Activated CD4-positive, alpha-beta memory T cell treated with anti-CD3 and anti-CD28 coated beads for 36 hours (primary cell): ENCODE measurements at regions of chr6 and their contacts with region 1.

Region 1: DNA sequence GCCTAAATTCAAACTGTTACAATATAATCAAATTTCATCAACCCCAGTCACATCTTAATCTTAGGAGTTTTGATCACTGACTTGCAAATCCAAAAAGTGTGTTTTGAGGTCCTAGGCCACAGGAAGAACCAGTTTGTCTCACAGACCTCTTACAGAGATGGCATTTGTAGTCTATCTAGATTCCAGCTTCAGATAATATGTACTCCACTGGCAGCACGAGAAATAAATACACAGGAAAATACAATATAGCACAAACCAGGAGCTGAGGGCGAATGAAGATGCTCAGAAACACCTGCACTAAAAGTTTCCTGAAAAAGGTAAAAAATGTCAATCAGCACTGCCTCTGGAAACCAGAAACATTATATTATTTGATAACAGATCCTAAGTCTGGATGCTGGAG is 647 bp upstream of the BTN3A3 start:
- DNase-seq: no peak
- H3K4me3 Mint-ChIP-seq: peak overlapping the region; percentile 90
- H3K27ac Mint-ChIP-seq: peak overlapping the region; percentile 93
- H3K4me1 Mint-ChIP-seq: peaks cover 40% of the 10 kb centered on the region
- H3K27me3 Mint-ChIP-seq: no peaks in the 10 kb centered on the region

Region 2: DNA sequence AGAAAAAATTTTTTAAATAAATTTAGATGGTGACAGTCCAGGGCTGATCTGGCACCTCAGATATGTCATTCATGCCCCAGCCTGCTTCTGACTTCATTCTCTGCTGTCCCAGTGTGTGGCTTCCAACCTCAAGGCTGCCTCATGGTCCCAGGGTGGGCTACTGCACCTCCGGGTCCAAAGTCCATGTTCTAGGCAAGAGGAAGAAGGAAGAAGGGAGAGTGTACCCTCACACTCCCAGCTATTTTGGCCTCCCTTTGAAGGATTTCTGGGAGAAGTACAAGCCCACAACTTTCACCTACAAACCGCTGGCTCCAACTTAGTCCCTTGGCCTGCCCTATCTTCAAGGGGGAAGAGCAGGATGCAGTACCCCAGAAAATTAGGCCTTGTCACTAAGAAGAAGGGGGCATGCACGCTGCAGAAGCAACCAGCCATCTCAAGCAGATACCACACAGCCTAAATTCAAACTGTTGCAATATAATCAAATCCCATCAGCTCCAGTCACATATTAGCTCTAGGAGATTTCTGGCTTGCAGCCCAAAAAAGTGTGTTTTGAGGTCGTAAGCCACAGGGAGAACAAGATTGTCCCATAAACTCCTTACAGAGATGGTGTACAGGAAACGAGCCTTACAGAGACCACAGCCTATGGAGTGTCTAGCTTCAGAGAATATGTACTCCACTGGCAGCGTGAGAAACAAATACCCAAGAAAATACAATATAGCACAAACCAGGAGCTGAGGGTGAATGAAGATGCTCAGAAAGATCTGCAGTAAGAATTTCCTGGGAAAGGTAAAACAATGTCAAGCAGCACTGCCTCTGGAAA is 75.6 kb before region 1 on chr6:
- CTCF ChIA-PET with region 1: no interaction called
- POLR2A ChIA-PET with region 1: no interaction called
- intact Hi-C with region 1: loop called (anchors 5 kb)
- DNase-seq: peak; percentile 18
- H3K4me3 Mint-ChIP-seq: no peak overlapping the region
- H3K27ac Mint-ChIP-seq: no peak overlapping the region
- H3K4me1 Mint-ChIP-seq: peaks cover 54% of the 10 kb centered on the region
- H3K27me3 Mint-ChIP-seq: no peaks in the 10 kb centered on the region

Region 3: DNA sequence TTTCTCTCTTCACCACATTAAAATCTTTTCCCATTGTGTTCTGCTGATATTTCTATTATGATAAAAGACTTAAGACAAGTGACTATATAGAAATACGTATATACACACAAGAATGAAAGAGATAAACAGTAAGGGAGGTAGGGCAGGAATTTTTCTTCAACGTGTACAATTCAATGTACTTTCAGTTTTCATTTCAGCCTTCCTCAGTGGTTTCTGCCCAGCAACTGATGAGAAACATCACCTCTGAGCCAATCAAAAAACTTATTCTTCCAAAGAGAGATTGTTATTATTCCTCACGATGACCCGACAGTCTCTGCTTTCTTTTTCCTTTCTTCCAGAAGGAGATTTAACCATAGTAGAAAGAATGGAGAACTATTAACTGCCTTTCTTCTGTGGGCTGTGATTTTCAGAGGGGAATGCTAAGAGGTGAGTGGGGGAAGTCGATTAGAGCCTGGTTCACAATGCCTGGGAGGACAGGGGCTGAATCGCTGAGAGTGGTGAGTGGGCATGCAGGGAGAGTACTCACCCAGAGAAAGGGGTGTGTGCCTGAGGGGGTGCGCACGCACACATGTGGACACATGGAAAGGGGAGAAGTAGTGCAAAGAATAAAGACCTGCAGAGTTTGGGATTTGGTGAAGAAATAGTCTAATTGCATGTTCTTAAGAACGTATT is 37.5 kb before region 1 on chr6 and contains the start of gene BTN3A1:
- CTCF ChIA-PET with region 1: no interaction called
- POLR2A ChIA-PET with region 1: no interaction called
- intact Hi-C with region 1: loop called (anchors 2 kb)
- DNase-seq: peak; percentile 80
- H3K4me3 Mint-ChIP-seq: peak within 1 kb of the TSS; percentile 89
- H3K27ac Mint-ChIP-seq: peak within 1 kb of the TSS; percentile 95
- H3K4me1 Mint-ChIP-seq: peaks cover 47% of the 10 kb centered on the region
- H3K27me3 Mint-ChIP-seq: no peaks in the 10 kb centered on the region
- total RNA-seq, gene BTN3A1: 36.5 to 39.0 TPM

Region 4: DNA sequence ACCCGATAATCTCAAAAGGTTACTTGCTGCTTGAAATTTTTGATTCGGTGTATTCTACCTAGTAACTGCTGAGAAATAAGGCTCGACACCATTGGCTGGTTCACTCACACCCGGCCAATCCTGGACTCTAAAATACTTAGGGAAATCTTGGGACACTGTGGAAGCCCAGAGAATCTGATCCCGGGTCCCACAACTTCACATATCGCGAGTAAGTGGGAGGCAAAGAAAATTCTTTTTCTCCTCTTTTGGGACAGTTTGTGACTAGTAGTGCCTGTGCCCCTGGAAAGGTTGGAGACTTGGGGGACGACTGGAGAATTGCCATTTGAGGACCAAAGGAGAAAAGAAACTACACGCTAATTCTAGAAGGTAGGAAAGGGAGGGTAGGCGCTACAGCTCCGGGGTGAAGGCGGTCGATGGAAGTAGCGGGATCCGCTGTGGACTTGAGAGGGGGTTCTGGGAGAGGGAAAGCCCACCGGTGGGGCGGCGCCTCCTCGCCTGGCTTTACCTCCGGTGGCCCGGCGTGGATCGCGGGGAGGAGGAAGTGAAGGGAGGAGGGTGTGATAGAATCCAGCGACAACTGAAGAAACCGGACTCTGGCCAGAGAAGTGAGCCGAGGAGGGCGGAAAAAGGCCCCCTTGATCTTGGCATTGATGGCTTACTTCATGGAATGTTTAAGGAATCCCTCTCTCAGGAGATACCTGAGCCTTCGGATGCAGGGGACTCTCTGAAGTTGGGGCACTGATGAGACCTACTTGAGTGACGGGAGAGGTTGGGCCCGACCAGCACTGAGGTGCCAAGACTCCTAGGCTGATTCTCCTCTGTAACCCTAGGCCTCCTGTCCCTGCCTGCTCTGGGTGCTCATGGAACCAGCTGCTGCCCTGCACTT is 18.2 kb before region 1 on chr6:
- CTCF ChIA-PET with region 1: no interaction called
- POLR2A ChIA-PET with region 1: no interaction called
- intact Hi-C with region 1: loop called (anchors 2 kb)
- DNase-seq: peak; percentile 62
- H3K4me3 Mint-ChIP-seq: no peak overlapping the region
- H3K27ac Mint-ChIP-seq: no peak overlapping the region
- H3K4me1 Mint-ChIP-seq: peaks cover 7% of the 10 kb centered on the region
- H3K27me3 Mint-ChIP-seq: no peaks in the 10 kb centered on the region

Region 5: DNA sequence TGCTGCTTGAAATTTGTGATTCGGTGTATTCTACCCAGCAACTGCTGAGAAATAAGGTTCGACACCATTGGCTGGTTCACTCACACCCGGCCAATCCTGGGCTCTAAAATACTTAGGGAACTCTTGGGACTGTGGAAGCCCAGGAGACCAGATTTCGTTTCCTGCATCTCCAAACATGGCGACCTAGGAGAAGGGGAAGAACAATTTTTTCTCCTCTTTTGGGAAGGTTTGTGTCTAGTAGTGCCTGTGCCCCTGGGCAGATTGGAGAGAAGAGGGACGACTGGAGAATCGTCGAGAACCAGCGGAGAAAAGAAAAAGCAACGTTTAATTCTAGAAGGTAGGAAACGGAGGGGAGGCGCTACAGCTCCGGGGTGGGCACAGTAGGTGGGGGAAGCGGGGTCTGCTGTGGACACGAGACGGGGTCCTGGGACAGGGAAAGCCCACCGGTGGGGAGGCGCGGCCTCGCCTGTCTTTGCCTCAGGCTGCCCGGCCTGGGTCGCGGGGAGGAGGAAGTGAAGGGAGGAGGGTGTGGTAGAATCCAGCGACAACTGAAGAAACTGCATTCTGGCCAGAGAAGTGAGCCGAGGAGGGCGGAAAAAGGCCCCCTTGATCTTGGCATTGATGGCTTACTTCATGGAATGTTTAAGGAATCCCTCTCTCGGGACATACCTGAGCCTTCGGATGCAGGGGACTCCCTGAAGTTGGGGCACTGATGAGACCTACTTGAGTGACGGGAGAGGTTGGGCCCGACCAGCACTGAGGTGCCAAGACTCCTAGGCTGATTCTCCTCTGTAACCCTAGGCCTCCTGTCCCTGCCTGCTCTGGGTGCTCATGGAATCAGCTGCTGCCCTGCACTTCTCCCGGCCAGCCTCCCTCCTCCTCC is 18.4 kb after region 1 on chr6 and contains the start of gene BTN2A1:
- CTCF ChIA-PET with region 1: no interaction called
- POLR2A ChIA-PET with region 1: no interaction called
- intact Hi-C with region 1: loop called (anchors 2 kb)
- DNase-seq: peak; percentile 79
- H3K4me3 Mint-ChIP-seq: peak within 1 kb of the TSS; percentile 98
- H3K27ac Mint-ChIP-seq: peak within 1 kb of the TSS; percentile 98
- H3K4me1 Mint-ChIP-seq: peaks cover 50% of the 10 kb centered on the region
- H3K27me3 Mint-ChIP-seq: no peaks in the 10 kb centered on the region
- total RNA-seq, gene BTN2A1: 17.6 to 19.6 TPM

Region 6: GRCh38 chr6:26537846-26538571 is 98.4 kb after region 1 on chr6 and contains the start of gene HMGN4:
- CTCF ChIA-PET with region 1: no interaction called
- POLR2A ChIA-PET with region 1: no interaction called
- intact Hi-C with region 1: loop called (anchors 2 kb)
- DNase-seq: peak; percentile 88
- H3K4me3 Mint-ChIP-seq: peak within 1 kb of the TSS; percentile 84
- H3K27ac Mint-ChIP-seq: peak within 1 kb of the TSS; percentile 97
- H3K4me1 Mint-ChIP-seq: peaks cover 64% of the 10 kb centered on the region
- H3K27me3 Mint-ChIP-seq: peaks cover 2% of the 10 kb centered on the region
- total RNA-seq, gene HMGN4: 93.2 to 96.0 TPM